Activated CD8-positive, alpha-beta T cell treated with anti-CD3 and anti-CD28 coated beads for 36 hours (primary cell): ENCODE measurements at regions of chr7 and their contacts with region 1.

Region 1: GRCh38 chr7:7681179-7681935 is 37.0 kb downstream of the RPA3 start:
- DNase-seq: peak; percentile 65
- ATAC-seq: peak; percentile 87
- H3K4me3 Mint-ChIP-seq: no peak overlapping the region
- H3K27ac Mint-ChIP-seq: no peak overlapping the region
- H3K4me1 Mint-ChIP-seq: peaks cover 33% of the 10 kb centered on the region
- H3K27me3 Mint-ChIP-seq: no peaks in the 10 kb centered on the region
- CTCF ChIP-seq: peak; percentile 82

Region 2: DNA sequence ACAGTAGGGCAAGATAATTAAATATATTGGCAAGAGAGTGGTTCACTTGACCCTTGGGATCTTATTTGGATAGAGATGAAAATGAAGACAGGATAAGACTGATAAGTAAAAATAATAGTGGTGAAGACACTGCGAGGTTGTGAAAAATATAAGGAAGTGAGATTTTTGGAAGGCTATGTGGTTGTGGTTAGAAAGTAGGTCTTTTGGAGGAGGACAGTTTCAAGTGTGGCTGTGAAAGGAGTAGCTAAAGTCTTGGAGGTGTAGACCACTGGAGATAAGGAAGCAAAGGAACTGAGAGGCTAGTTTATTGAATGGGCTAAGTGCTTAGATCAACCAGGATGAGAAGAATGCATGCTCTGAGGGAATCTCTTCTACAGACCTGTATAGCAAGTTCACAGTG is 103.5 kb before region 1 on chr7:
- CTCF ChIA-PET with region 1: no interaction called
- POLR2A ChIA-PET with region 1: no interaction called
- intact Hi-C with region 1: no loop called
- DNase-seq: no peak
- ATAC-seq: no peak
- H3K4me3 Mint-ChIP-seq: no peak overlapping the region
- H3K27ac Mint-ChIP-seq: no peak overlapping the region
- H3K4me1 Mint-ChIP-seq: peaks cover 14% of the 10 kb centered on the region
- H3K27me3 Mint-ChIP-seq: no peaks in the 10 kb centered on the region
- CTCF ChIP-seq: no peak

Region 3: DNA sequence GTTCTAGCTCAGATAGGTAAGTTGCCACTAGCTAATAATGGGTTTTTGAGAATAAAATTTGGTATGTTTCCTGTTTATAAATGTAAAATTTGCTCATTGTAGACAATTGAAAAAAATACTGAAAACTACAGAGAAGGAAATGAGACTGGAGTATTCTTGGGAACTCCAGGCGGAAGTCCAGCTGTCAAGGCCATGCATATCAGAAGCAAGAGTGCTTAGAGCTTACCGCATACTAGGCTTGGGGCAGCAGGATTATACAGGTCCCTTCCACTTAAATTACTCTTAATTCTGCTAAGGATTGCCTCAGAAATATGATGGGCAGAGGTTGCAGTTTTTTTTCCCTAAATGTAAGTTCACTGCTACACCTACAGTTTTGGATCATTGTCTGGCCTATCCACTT is 14.2 kb before region 1 on chr7:
- CTCF ChIA-PET with region 1: interaction called, 12 read pairs
- POLR2A ChIA-PET with region 1: interaction called, 4 read pairs
- intact Hi-C with region 1: no loop called
- DNase-seq: no peak
- ATAC-seq: no peak
- H3K4me3 Mint-ChIP-seq: no peak overlapping the region
- H3K27ac Mint-ChIP-seq: no peak overlapping the region
- H3K4me1 Mint-ChIP-seq: peaks cover 43% of the 10 kb centered on the region
- H3K27me3 Mint-ChIP-seq: no peaks in the 10 kb centered on the region
- CTCF ChIP-seq: no peak

Region 4: GRCh38 chr7:7719236-7719635 is 37.9 kb after region 1 on chr7:
- CTCF ChIA-PET with region 1: interaction called, 13 read pairs
- POLR2A ChIA-PET with region 1: no interaction called
- intact Hi-C with region 1: no loop called
- DNase-seq: peak; percentile 68
- ATAC-seq: peak; percentile 94
- H3K4me3 Mint-ChIP-seq: peak overlapping the region; percentile 44
- H3K27ac Mint-ChIP-seq: peak overlapping the region; percentile 90
- H3K4me1 Mint-ChIP-seq: peaks cover 24% of the 10 kb centered on the region
- H3K27me3 Mint-ChIP-seq: no peaks in the 10 kb centered on the region
- CTCF ChIP-seq: no peak

Region 5: DNA sequence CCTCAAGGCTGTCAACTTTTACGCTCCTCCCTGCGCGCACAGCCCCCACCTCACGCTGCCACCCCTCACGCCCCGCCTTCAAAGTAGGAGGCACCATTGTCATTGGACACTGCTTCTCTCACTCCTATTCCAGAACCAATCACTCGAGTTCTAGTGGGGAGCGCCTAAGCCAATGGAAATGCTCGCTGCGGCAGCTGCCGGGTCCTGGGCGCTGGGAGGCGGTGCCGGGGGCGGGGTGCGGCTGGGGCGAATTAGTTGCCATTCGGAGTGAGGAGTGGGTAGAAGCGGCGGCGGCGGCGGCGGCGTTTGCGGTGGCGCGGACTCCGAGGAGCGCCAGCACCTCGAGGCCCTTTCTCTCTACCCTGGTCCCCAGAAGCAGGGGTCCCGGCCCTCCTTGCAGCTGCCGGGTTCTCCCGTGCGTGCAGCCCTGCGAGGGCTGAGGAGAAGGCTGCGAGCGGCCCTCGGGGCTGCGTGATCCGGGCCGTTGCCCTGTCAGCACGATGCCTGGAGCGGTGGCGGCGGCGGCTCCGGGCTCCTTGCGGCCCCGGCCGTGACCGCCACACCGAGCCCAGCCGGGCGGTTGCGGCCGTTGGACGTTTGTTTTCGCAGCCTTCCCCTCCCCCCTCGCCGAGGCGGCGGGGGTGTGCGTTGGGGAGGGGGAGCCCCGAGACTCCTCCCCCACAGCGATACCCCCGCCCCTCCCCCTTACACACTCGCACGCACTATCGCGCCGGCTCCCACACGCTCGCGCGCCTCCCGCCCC is 287.4 kb after region 1 on chr7 and contains the start of gene GLCCI1:
- CTCF ChIA-PET with region 1: interaction called, 8 read pairs
- POLR2A ChIA-PET with region 1: interaction called, 3 read pairs
- intact Hi-C with region 1: loop called (anchors 5 kb)
- DNase-seq: peak; percentile 98
- ATAC-seq: peak; percentile 92
- H3K4me3 Mint-ChIP-seq: peak within 1 kb of the TSS; percentile 93
- H3K27ac Mint-ChIP-seq: peak within 1 kb of the TSS; percentile 92
- H3K4me1 Mint-ChIP-seq: peaks cover 27% of the 10 kb centered on the region
- H3K27me3 Mint-ChIP-seq: no peaks in the 10 kb centered on the region
- CTCF ChIP-seq: no peak
- total RNA-seq, gene GLCCI1: 11.3 to 13.0 TPM

Region 6: DNA sequence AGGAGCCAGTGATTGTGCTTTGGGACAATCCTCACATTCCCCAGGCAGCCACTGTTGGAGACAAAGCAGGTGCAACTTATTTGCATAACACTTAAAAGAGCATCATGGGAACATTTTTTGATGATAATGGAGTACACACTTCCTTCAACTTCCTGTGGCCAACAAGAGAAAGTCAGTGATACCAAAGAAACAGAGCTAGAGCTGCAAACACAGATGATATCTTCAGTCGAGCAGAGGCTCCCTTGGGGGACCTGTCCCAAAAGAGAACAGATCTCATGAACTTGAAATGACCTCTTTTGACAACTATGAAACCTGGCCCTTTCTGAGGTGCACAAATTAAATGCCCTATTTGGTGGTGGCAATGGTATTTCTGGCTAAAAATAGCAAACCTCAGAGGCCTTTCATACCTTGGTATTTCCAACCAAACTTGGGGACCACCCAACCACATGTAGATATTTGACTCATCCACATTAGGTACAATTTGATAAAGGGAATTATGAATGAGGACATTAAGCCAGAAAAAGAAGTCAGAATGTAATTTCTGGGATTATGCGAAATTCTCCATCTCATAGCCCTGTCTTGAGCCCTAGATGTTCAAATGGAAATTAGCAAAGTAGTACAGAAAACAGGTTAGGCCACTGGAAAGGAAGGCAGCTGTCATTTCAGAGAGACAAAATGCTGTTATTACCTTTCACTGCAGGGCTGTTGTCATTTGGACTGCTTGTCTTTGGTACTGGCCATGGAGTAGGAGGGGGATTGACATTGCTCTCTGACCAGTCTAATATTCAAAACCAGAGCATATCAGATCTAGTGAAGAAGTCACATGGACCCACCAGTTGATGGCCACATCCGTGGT is 434.4 kb after region 1 on chr7:
- CTCF ChIA-PET with region 1: no interaction called
- POLR2A ChIA-PET with region 1: no interaction called
- intact Hi-C with region 1: loop called (anchors 10 kb)
- DNase-seq: peak; percentile 59
- ATAC-seq: peak; percentile 86
- H3K4me3 Mint-ChIP-seq: no peak overlapping the region
- H3K27ac Mint-ChIP-seq: peak overlapping the region; percentile 77
- H3K4me1 Mint-ChIP-seq: peaks cover 54% of the 10 kb centered on the region
- H3K27me3 Mint-ChIP-seq: no peaks in the 10 kb centered on the region
- CTCF ChIP-seq: no peak

Region 7: GRCh38 chr7:8217200-8218068 is 536.1 kb after region 1 on chr7:
- CTCF ChIA-PET with region 1: interaction called, 20 read pairs
- POLR2A ChIA-PET with region 1: no interaction called
- intact Hi-C with region 1: no loop called
- DNase-seq: peak; percentile 26
- ATAC-seq: peak; percentile 60
- H3K4me3 Mint-ChIP-seq: no peak overlapping the region
- H3K27ac Mint-ChIP-seq: no peak overlapping the region
- H3K4me1 Mint-ChIP-seq: peaks cover 2% of the 10 kb centered on the region
- H3K27me3 Mint-ChIP-seq: no peaks in the 10 kb centered on the region
- CTCF ChIP-seq: peak; percentile 86